ENCODE measurements at regions of chr14 and their contacts with region 1.

Region 1: GRCh38 chr14:94036313-94037050 is 10.3 kb downstream of the OTUB2 start:
- DNase-seq: peak; percentile 64 to 71
- ATAC-seq: peak; percentile 79 to 89 (median 86)
- H3K4me3 ChIP-seq: no peak overlapping the region
- H3K27ac ChIP-seq: no peak overlapping the region
- H3K4me1 ChIP-seq: peaks cover 0 to 18% (median 2%) of the 10 kb centered on the region in 9 donors
- H3K27me3 ChIP-seq: no peaks in the 10 kb centered on the region
- CTCF ChIP-seq: peak; percentile 75 to 90 (median 86)

Region 2: DNA sequence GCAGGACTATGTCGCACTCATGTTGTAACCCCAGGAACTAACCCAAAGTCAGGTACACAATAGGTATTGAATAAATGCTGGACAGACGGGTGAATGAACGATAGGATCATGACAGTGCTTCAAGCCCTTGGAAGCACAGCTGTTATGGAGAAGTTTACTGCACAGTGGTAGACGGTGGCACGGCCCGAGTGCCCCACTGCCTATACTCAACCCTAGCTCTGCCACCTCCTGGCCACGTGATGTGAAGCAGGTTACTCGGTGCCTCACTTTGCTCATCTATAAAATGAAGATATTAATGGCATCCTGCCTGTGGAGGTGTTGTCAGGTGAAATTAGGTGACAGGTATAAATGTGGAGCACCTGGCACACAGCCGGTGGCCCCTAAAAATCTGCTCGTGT is 65.9 kb before region 1 on chr14:
- intact Hi-C with region 1: no loop called
- DNase-seq: no peak
- ATAC-seq: peak in 1 of 8 donors; percentile 46
- H3K4me3 ChIP-seq: peak overlapping the region in 8 of 10 donors; percentile 6 to 51 (median 40)
- H3K27ac ChIP-seq: peak overlapping the region in 9 of 10 donors; percentile 28 to 91 (median 65)
- H3K4me1 ChIP-seq: peaks cover 17 to 94% (median 56%) of the 10 kb centered on the region in 9 donors
- H3K27me3 ChIP-seq: no peaks in the 10 kb centered on the region
- CTCF ChIP-seq: peak in 6 of 9 donors; percentile 7 to 42 (median 33)

Region 3: GRCh38 chr14:94080471-94081289 is 44.2 kb after region 1 on chr14 and contains the start of gene DDX24:
- intact Hi-C with region 1: loop called in 1 of 10 experiments (anchors 5 kb)
- DNase-seq: peak; percentile 97
- ATAC-seq: peak; percentile 99 to 100 (median 100)
- H3K4me3 ChIP-seq: peak within 1 kb of the TSS; percentile 71 to 99 (median 97)
- H3K27ac ChIP-seq: peak within 1 kb of the TSS; percentile 61 to 96 (median 92)
- H3K4me1 ChIP-seq: peaks cover 10 to 55% (median 52%) of the 10 kb centered on the region in 9 donors
- H3K27me3 ChIP-seq: no peaks in the 10 kb centered on the region
- CTCF ChIP-seq: no peak
- total RNA-seq, gene DDX24: 190 to 269 (median 240) TPM

Region 4: DNA sequence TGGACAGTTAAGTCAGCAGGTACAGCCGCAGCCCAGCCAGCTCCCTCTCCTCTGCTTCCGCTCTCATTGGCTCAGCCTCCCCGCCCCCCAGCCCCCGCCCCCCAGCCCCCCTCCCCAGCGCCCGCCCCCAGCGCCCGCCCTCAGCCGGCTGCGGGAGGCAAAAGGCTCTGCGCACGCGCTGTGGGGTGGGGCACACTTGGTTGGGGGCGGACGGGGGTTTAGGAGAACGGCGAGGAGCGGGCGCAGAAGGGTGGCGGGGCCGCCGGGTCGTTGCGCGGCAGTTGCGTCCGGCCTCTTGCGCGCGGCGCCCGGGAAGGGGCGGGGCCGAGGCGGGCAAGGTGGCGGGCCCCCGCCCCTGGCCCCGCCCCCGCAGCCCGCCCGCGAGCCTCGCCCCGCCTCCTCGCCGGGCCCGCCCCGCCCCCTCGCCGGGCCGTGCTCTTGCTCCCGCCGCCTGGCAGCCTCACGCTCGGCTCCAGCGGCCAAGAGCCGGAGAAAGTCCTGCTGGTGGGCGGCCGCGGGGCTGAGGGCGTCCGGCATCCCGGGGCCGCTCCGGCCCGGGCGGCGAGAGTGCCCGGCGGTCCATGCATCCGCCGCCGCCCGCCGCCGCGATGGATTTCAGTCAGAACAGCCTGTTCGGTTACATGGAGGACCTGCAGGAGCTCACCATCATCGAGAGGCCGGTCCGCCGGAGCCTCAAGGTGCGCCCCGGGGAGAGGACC is 137.6 kb after region 1 on chr14 and contains the start of gene PPP4R4:
- intact Hi-C with region 1: loop called in 1 of 10 experiments (anchors 5 kb)
- DNase-seq: peak; percentile 81 to 84
- ATAC-seq: peak; percentile 83 to 93 (median 91)
- H3K4me3 ChIP-seq: peak within 1 kb of the TSS; percentile 35 to 76 (median 64)
- H3K27ac ChIP-seq: peak within 1 kb of the TSS in 4 of 10 donors; percentile 2 to 73 (median 46)
- H3K4me1 ChIP-seq: peaks cover 6 to 24% (median 18%) of the 10 kb centered on the region in 9 donors
- H3K27me3 ChIP-seq: peaks cover 2 to 67% (median 35%) of the 10 kb centered on the region in 7 donors
- CTCF ChIP-seq: no peak
- total RNA-seq, gene PPP4R4: 0.13 to 0.46 (median 0.31) TPM in 5 of 10 donors, not detected in the others

Region 5: GRCh38 chr14:94180655-94181271 is 144.3 kb after region 1 on chr14:
- intact Hi-C with region 1: loop called in 6 of 10 experiments (anchors 1 to 5 kb)
- DNase-seq: no peak
- ATAC-seq: peak in 3 of 8 donors; percentile 33 to 49 (median 47)
- H3K4me3 ChIP-seq: peak overlapping the region in 3 of 10 donors; percentile 15 to 30 (median 18)
- H3K27ac ChIP-seq: no peak overlapping the region
- H3K4me1 ChIP-seq: peaks cover 0 to 8% (median under 1%) of the 10 kb centered on the region in 9 donors
- H3K27me3 ChIP-seq: peaks cover 2 to 67% (median 30%) of the 10 kb centered on the region in 7 donors
- CTCF ChIP-seq: peak; percentile 31 to 70 (median 61)